ENCODE measurements at regions of chr7 and their contacts with region 1.

Region 1: GRCh38 chr7:140640727-140641523 is at the start of gene DENND2A:
- DNase-seq: peak; percentile 28 to 34
- ATAC-seq: peak; percentile 28 to 49
- H3K4me3 ChIP-seq: peak within 1 kb of the TSS; percentile 60 to 66 (median 63)
- H3K27ac ChIP-seq: peak within 1 kb of the TSS; percentile 82 to 83 (median 83)
- H3K4me1 ChIP-seq: peaks cover 9 to 12% of the 10 kb centered on the region in 2 donors
- H3K27me3 ChIP-seq: peaks cover 18 to 43% (median 25%) of the 10 kb centered on the region in 3 donors
- CTCF ChIP-seq: no peak
- POLR2A ChIP-seq: no peak
- total RNA-seq, gene DENND2A: 0.73 to 2.6 (median 1.6) TPM

Region 2: GRCh38 chr7:140541513-140542227 is 99.3 kb before region 1 on chr7:
- in situ Hi-C with region 1: no loop called
- intact Hi-C with region 1: loop called (anchors 5 kb)
- DNase-seq: peak; percentile 22 to 49
- ATAC-seq: peak; percentile 61 to 71
- H3K4me3 ChIP-seq: peak overlapping the region in 1 of 4 donors; percentile 16
- H3K27ac ChIP-seq: peak overlapping the region; percentile 57 to 71 (median 66)
- H3K4me1 ChIP-seq: peaks cover 6 to 14% of the 10 kb centered on the region in 2 donors
- H3K27me3 ChIP-seq: no peaks in the 10 kb centered on the region
- CTCF ChIP-seq: no peak
- POLR2A ChIP-seq: no peak

Region 3: DNA sequence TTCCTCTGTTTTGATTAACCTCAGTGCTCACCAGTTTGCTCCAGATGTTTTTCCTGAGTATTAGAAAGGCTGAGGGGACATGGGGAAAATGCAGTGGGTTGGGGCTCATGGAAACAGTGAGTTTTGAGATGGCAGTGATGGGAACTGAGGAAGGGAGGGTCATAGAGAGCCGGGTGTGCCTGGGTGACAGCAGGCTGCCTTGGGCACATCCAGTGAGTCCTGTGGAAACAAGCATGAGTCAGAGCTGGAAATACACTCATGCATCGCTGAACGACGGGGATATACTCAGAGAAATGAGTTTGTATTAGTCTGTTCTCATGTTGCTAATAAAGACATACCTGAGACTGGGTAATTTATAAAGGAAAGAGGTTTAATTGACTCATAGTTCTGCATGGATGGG is 635.1 kb after region 1 on chr7:
- in situ Hi-C with region 1: no loop called
- intact Hi-C with region 1: no loop called
- DNase-seq: no peak
- ATAC-seq: no peak
- H3K4me3 ChIP-seq: no peak overlapping the region
- H3K27ac ChIP-seq: no peak overlapping the region
- H3K4me1 ChIP-seq: peaks cover 0 to 6% of the 10 kb centered on the region in 2 donors
- H3K27me3 ChIP-seq: no peaks in the 10 kb centered on the region
- CTCF ChIP-seq: no peak
- POLR2A ChIP-seq: no peak

Measured in gastrocnemius medialis (tissue), 4 donors.